Activated CD4-positive, alpha-beta T cell treated with anti-CD3 and anti-CD28 coated beads, Interleukin-2, amount 10 ng/mL, durations not matched to agents 24 days and 14 days (primary cell): ENCODE measurements at regions of chr11 and their contacts with region 1.

Region 1: DNA sequence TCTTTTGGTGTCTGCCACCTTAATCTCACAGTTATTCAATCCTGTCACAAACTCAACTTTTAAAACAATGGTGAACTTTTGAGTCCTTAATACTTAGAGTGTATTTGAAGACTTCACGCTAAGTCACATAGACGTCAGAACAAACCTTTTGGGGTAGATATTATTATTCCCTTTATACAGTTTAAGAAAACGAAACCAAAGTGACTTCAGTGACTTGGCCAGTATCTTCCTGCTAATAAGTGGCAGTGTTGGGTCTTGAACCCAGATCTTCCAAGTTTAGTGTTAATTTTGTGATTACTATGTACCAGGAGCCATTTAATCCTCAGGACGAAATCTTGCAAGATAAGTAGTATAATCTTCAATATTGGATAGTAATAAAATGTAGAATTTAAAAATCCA is 694 bp downstream of the CEP295 start:
- DNase-seq: no peak
- H3K4me3 Mint-ChIP-seq: peak overlapping the region; percentile 90
- H3K27ac Mint-ChIP-seq: peak overlapping the region; percentile 85
- H3K4me1 Mint-ChIP-seq: peaks cover 38% of the 10 kb centered on the region
- H3K27me3 Mint-ChIP-seq: no peaks in the 10 kb centered on the region

Region 2: GRCh38 chr11:93512073-93512475 is 150.1 kb before region 1 on chr11:
- intact Hi-C with region 1: no loop called
- DNase-seq: peak; percentile 73
- H3K4me3 Mint-ChIP-seq: peak overlapping the region; percentile 63
- H3K27ac Mint-ChIP-seq: peak overlapping the region; percentile 89
- H3K4me1 Mint-ChIP-seq: peaks cover 33% of the 10 kb centered on the region
- H3K27me3 Mint-ChIP-seq: no peaks in the 10 kb centered on the region

Region 3: GRCh38 chr11:93623179-93623578 is 39.0 kb before region 1 on chr11:
- intact Hi-C with region 1: no loop called
- DNase-seq: no peak
- H3K4me3 Mint-ChIP-seq: no peak overlapping the region
- H3K27ac Mint-ChIP-seq: no peak overlapping the region
- H3K4me1 Mint-ChIP-seq: no peaks in the 10 kb centered on the region
- H3K27me3 Mint-ChIP-seq: peaks cover 4% of the 10 kb centered on the region

Region 4: GRCh38 chr11:93639548-93639947 is 22.6 kb before region 1 on chr11:
- intact Hi-C with region 1: no loop called
- DNase-seq: no peak
- H3K4me3 Mint-ChIP-seq: no peak overlapping the region
- H3K27ac Mint-ChIP-seq: no peak overlapping the region
- H3K4me1 Mint-ChIP-seq: peaks cover 3% of the 10 kb centered on the region
- H3K27me3 Mint-ChIP-seq: peaks cover 11% of the 10 kb centered on the region

Region 5: DNA sequence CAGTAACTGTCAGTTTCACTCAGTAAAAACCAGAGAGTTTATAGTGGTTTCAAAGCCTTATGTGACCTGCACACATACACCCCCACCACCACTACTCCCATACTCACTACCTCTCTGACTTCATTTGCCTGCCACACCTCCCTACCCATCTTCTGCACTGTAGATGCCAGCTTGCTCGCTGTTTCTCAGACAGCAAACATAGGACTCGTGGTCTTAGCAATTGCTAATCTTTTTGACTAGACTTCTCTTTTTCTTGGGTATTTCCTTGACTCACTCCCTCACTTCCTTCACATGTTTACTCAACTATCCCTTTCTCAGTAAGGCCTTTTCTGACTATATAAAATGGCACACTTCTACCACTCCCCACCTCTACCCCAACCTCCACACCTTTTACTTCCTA is 27.1 kb after region 1 on chr11:
- intact Hi-C with region 1: no loop called
- DNase-seq: no peak
- H3K4me3 Mint-ChIP-seq: no peak overlapping the region
- H3K27ac Mint-ChIP-seq: peak overlapping the region; percentile 77
- H3K4me1 Mint-ChIP-seq: peaks cover 22% of the 10 kb centered on the region
- H3K27me3 Mint-ChIP-seq: no peaks in the 10 kb centered on the region

Region 6: GRCh38 chr11:93704237-93704636 is 42.1 kb after region 1 on chr11:
- intact Hi-C with region 1: loop called (anchors 5 kb)
- DNase-seq: no peak
- H3K4me3 Mint-ChIP-seq: no peak overlapping the region
- H3K27ac Mint-ChIP-seq: no peak overlapping the region
- H3K4me1 Mint-ChIP-seq: no peaks in the 10 kb centered on the region
- H3K27me3 Mint-ChIP-seq: no peaks in the 10 kb centered on the region

Region 7: DNA sequence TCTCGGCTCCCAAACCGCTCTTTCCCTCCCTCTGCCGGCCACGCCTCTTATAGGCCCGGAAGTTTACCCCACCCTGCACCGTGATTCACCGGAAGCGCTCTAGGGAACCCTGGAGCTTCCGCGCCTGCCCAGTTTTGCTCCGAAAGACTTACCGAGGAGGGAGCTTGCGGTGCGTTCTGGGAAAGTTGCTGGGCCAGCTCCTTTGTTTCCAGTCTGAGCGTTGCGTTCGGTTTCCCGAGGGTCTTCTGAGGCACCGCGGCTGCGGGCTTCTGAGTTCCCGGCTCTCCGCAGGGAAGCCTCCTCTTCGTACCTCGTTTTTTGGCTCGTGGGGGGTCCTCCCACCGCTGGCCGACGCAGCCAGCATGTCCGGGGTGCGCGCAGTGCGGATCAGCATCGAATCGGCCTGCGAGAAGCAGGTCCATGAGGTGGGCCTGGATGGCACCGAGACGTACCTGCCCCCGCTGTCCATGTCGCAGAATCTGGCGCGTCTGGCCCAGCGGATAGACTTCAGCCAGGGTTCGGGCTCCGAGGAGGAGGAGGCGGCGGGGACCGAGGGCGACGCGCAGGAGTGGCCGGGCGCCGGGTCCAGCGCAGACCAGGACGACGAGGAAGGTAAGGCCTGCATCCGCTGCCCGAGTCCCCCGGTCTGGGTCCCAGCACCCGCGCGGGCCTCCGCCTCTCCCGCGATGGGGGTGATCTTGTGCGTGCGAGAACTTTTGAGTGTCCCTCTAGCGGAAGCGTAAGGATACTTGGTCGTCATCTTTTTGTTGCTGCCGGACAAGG is 122.2 kb after region 1 on chr11 and contains the start of gene MED17:
- intact Hi-C with region 1: loop called (anchors 2 kb)
- DNase-seq: peak; percentile 97
- H3K4me3 Mint-ChIP-seq: peak within 1 kb of the TSS; percentile 99
- H3K27ac Mint-ChIP-seq: peak within 1 kb of the TSS; percentile 95
- H3K4me1 Mint-ChIP-seq: peaks cover 41% of the 10 kb centered on the region
- H3K27me3 Mint-ChIP-seq: no peaks in the 10 kb centered on the region
- total RNA-seq, gene MED17: 48.5 and 55.1 TPM in 2 replicates

Region 8: DNA sequence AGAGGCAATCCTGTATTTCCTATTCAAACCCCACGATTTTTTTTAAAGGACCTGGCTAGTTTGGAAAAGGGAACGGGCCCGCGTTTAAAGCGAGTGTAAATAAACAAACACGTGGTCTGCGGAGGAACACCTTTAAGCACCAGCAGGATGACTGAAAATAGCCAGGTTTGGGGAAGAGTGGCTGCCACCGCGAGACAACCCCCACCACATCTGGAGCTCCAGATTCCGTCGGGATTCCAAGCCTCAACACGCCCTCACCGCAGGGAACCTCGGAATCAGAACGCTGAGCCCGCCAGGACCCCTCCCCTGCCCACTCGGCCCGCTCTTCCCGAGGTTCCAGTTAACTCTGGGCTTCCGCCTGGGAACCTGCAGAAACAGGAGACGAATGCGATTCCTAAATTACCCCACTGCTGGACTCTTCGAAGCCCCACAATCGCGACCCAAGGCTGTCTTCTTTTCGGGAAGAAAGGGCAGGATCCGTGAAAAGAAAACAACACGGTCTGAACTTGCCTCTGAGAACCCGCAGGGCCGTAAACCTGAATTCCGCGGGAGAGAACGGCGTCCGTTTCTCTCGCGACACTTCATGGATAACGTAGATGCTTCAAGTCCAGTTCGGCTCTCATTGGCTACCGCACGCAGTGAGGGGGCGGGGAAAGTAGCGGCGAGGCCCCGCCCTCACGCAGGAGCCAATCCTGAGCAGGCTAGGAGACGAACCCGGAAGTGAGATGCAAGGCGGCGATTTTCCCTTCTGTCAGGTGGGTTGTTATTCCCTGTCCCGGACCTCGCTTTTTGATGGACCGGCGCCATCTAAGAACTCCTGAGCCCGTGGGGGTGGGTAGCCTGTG is 831.3 kb after region 1 on chr11 and contains the starts of genes ANKRD49 and MRE11:
- intact Hi-C with region 1: loop called (anchors 5 kb)
- DNase-seq: peak; percentile 99
- H3K4me3 Mint-ChIP-seq: peak within 1 kb of the TSS; percentile 96
- H3K27ac Mint-ChIP-seq: peak within 1 kb of the TSS; percentile 95
- H3K4me1 Mint-ChIP-seq: peaks cover 30% of the 10 kb centered on the region
- H3K27me3 Mint-ChIP-seq: no peaks in the 10 kb centered on the region
- total RNA-seq, gene ANKRD49: 18.4 and 22.6 TPM in 2 replicates
- total RNA-seq, gene MRE11: 45.4 and 46.5 TPM in 2 replicates